Posterior cingulate gyrus (tissue), 11 donors: ENCODE measurements at regions of chr11 and their contacts with region 1.

Region 1: GRCh38 chr11:36564376-36565030 is 3.3 kb upstream of the RAG1 start:
- DNase-seq: peak in 7 of 10 donors; percentile 41 to 84 (median 58)

Region 2: DNA sequence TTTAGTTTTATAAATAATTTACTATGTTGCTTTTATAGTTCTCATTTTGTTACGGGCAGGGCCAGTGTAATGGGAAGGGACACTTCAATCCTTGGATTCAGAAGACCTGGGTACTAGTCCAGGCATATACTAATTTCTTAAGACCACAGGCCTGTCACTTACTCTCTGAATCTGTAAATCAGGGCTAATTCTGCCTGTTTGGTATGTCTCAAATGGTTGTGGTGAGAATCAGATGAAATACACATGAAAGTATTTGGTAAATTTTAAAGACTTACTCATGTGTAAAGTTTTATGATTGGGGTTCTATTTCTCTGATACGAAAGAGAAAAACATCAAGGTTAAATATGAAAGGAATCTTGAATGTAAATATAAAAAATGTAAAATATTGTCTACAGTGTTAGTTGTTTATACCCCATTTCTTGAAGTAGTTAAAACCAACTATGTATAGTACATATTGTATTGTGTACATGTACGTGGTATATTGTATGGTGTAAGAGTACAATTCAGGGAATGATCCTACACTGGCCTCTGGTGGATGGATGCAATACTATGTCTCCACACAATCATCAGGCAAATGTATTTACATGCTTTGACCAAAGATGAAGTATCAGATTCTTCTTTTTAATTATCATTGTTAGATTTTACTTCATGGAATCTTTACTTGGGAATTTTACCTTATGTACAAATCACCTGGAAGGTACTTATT is 58.1 kb after region 1 on chr11:
- intact Hi-C with region 1: loop called (anchors 5 kb)
- DNase-seq: no peak

Region 3: DNA sequence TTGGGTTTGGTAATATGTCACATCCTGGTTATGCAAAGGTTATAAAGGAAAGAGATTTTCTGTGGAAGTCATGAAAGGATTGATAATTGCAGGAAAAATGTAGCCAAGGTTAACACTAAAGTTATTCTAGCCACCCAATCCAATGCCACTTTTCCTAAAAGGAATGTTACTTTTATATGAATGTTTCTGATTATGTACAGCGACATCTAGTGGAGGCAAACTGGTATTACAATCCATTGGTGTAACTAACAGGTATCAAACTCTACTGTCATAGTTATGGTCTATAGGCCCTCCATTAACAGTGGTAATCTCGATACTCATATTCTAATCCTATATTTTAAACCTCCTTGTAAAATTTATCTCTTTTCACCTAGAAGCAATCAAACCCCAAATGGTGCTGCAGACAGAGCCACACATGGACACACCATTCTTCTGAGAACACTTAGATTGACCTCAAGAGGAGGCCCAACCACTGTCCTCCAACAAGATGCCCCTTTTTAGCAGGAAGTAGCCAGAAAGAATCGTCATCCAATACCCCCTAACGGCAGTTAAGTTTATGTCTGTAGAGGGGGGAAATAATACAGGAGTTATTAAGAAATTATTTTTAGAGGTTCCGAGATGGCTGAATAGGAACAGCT is 108.4 kb after region 1 on chr11:
- intact Hi-C with region 1: loop called (anchors 1 kb)
- DNase-seq: no peak

Region 4: GRCh38 chr11:36746886-36747710 is 182.6 kb after region 1 on chr11:
- intact Hi-C with region 1: loop called (anchors 5 kb)
- DNase-seq: peak; percentile 45 to 95 (median 76)